ENCODE measurements at regions of chr19 and their contacts with region 1.

Region 1: GRCh38 chr19:18152444-18152816 is 533 bp upstream of the PIK3R2 start:
- DNase-seq: peak; percentile 94 to 98
- H3K4me3 ChIP-seq: peak overlapping the region; percentile 86 to 96
- H3K27ac ChIP-seq: peak overlapping the region; percentile 93 to 95
- H3K4me1 ChIP-seq: peaks cover 14 to 18% of the 10 kb centered on the region in 2 donors
- H3K27me3 ChIP-seq: no peaks in the 10 kb centered on the region
- CTCF ChIP-seq: peak; percentile 53 to 82 (median 69)

Region 2: DNA sequence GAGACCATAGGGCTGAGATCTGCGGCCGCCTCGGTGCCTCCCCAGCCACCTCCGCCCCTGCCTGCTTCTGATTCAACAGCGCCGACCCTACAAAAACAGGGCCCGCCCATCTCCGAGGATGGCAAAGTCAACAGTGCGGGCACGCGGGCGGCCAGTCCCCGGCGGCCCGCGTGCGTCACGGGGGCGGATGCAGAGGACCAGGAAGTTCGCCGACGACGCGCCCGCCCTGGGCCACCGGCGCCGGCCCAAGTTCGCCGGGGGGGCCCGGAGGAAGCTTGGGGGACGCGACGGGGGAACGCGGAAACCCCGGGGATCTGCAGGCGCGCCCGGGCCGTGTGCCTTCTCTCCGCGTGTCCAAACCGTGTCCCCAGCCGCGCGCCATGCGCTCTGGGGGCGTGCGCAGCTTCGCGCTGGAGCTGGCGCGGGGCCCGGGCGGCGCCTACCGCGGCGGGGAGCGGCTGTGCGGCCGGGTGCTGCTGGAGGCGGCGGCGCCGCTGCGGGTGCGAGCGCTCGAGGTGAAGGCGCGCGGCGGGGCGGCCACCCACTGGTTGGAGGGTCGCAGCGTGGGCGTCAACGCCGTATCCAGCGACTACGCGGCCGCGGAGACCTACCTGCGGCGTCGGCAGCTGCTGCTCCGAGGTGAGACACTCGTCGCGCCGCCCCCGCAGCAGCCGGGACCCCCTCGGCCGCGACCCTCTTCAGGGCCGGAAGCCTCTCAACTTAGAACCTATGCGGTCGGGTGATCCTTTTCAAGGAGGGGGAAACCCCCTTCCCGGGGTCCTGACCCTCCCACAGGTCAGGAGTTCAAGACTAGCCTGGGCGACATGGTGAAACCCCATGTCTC is 151.3 kb before region 1 on chr19:
- intact Hi-C with region 1: loop called (anchors 2 kb)
- DNase-seq: peak; percentile 93 to 99
- H3K4me3 ChIP-seq: peak overlapping the region; percentile 72 to 80
- H3K27ac ChIP-seq: peak overlapping the region; percentile 88 to 95
- H3K4me1 ChIP-seq: peaks cover 4 to 10% of the 10 kb centered on the region in 2 donors
- H3K27me3 ChIP-seq: no peaks in the 10 kb centered on the region
- CTCF ChIP-seq: no peak

Region 3: DNA sequence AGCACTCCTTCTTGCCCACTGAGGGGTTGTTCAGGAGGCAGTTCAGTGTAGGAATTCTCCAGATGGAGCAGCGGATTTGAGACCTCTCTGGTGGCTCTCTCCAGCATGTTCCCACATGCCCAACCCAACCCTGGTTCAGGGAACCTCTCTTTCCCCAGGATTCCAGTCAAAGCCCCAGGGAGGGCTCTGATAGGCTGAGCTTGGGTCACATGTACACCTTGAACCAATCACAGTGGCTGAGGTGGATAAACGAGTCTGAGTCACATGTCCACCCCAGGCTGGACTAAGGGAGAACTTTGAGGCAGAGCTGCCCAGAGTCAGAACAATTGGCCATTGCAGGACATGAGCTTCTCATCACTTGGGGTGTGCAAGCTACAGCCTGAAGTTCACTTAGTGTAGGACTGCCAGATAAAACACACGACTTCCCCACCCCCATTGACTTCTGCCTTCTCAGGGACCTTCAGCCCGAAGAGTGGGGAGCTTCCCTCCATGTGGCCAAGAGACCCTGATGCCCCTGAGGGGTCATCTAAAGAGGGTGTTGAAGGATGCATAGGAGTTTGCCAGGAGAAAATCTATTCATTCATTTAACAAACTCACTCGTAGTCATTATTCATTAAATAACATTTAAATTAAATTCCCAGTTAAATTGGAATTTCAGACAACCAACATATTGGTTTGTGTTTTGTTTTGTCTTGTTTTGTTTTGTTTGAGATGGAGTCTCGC is 58.8 kb before region 1 on chr19:
- intact Hi-C with region 1: loop called (anchors 2 kb)
- DNase-seq: no peak
- H3K4me3 ChIP-seq: no peak overlapping the region
- H3K27ac ChIP-seq: peak overlapping the region; percentile 38 to 69
- H3K4me1 ChIP-seq: peaks cover 9 to 35% of the 10 kb centered on the region in 2 donors
- H3K27me3 ChIP-seq: no peaks in the 10 kb centered on the region
- CTCF ChIP-seq: no peak

Region 4: GRCh38 chr19:18117692-18118378 is 34.6 kb before region 1 on chr19:
- intact Hi-C with region 1: loop called (anchors 2 kb)
- DNase-seq: peak; percentile 34 to 90
- H3K4me3 ChIP-seq: peak overlapping the region; percentile 71 to 73
- H3K27ac ChIP-seq: peak overlapping the region; percentile 66 to 74
- H3K4me1 ChIP-seq: peaks cover 0 to 16% of the 10 kb centered on the region in 2 donors
- H3K27me3 ChIP-seq: no peaks in the 10 kb centered on the region
- CTCF ChIP-seq: peak in 1 of 3 experiments; percentile 8

Region 5: DNA sequence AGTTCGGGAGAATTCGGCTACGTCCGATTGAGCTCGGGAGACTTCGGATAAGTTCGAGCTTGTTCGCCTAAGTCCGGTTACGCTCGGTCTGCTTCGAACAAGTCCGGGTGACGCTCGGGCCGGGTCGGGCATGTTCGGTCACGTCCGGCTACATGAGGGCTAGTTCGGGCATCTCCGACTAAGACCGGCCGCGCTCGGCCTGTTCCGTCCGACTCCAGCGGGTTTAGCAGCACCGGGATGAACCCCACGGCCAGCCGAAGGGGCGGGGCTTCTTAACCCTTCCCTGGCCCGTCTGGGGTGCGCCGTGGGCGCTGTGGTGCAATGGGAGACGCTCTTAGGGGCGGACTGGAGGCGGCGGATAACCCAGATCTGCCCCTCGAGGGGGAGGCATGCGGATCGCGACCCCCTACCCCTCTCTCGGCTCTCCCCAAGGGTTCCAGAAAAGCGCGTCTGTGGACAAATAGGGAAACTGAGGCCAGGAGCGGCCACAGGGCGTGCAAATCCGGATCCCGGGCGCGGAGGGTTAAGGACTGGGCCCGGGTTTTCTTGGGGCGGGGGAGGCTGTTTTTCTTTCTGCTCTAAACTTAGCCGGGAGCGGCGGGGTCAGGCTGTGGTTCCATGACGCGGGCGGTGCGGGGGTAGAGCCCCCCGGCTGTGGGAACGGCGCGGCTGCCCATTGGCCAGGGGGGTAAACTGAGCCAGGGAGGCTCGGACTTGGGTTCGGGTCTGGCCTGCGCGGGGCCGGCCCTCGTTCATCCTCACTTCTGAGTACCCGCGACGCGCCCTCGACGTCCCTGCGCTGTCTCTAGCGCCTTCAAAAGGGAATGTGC is 72.3 kb after region 1 on chr19:
- intact Hi-C with region 1: loop called (anchors 1 kb)
- DNase-seq: peak; percentile 87 to 99
- H3K4me3 ChIP-seq: peak overlapping the region; percentile 44 to 54
- H3K27ac ChIP-seq: no peak overlapping the region
- H3K4me1 ChIP-seq: peaks cover 7 to 15% of the 10 kb centered on the region in 2 donors
- H3K27me3 ChIP-seq: peaks cover 16% of the 10 kb centered on the region
- CTCF ChIP-seq: no peak

Measured in ascending aorta (tissue), 2 donors.